GM12878 (cell line): ENCODE measurements at regions of chrX and their contacts with region 1.

Region 1: GRCh38 chrX:18377796-18378195 is 23.3 kb upstream of the SCML2 start:
- DNase-seq: no peak
- ATAC-seq: peak; percentile 85
- H3K4me3 ChIP-seq: no peak overlapping the region
- H3K27ac ChIP-seq: no peak overlapping the region
- H3K4me1 ChIP-seq: no peaks in the 10 kb centered on the region
- H3K27me3 ChIP-seq: no peaks in the 10 kb centered on the region; a peak in 1 of 4 replicates
- CTCF ChIP-seq: peak; percentile 61 to 65 (median 65)
- EP300 ChIP-seq: no peak
- POLR2A ChIP-seq: no peak
- RAD21 ChIP-seq: peak; percentile 68

Region 2: GRCh38 chrX:17744896-17745523 is 632.8 kb before region 1 on chrX:
- CTCF ChIA-PET with region 1: interaction called, 4 read pairs
- POLR2A ChIA-PET with region 1: no interaction called
- RAD21 ChIA-PET with region 1: no interaction called
- SMC1A ChIA-PET with region 1: interaction called, 3 read pairs
- in situ Hi-C with region 1: no loop called
- intact Hi-C with region 1: loop called (anchors 1 kb)
- DNase-seq: no peak
- ATAC-seq: peak; percentile 46; the same call in 2 of the 3 replicates
- H3K4me3 ChIP-seq: no peak overlapping the region
- H3K27ac ChIP-seq: no peak overlapping the region
- H3K4me1 ChIP-seq: no peaks in the 10 kb centered on the region
- H3K27me3 ChIP-seq: no peaks in the 10 kb centered on the region
- CTCF ChIP-seq: peak in 2 of 3 experiments; percentile 8 to 20; a peak in 2 of 6 replicates
- EP300 ChIP-seq: no peak
- POLR2A ChIP-seq: no peak
- RAD21 ChIP-seq: 0 out of 2 replicates have a peak, but pooled peaks have one; percentile 18

Region 3: DNA sequence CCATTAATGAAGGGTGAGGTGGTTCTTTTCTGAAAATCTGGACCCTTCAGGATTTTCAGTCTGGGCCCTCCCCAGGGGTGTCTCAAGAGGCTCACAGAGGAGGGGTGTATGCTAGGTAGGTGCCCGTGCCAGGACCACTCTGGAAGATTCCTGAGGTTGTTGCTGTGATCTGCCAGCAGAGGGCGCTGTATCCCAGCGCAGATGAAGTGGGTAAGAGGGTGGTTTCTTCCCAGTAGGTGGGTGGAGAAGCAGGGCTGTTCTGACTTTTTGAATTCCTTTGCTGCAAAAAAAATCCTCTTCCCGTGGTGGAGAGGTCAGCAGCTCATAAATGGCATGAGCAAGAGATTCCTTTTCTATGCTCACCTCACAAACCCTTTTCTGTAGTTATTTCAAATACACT is 589.4 kb before region 1 on chrX:
- CTCF ChIA-PET with region 1: interaction called, 3 read pairs
- POLR2A ChIA-PET with region 1: no interaction called
- RAD21 ChIA-PET with region 1: no interaction called
- SMC1A ChIA-PET with region 1: no interaction called
- in situ Hi-C with region 1: no loop called
- intact Hi-C with region 1: loop called (anchors 2 kb)
- DNase-seq: no peak
- ATAC-seq: peak; percentile 80
- H3K4me3 ChIP-seq: no peak overlapping the region
- H3K27ac ChIP-seq: no peak overlapping the region
- H3K4me1 ChIP-seq: no peaks in the 10 kb centered on the region
- H3K27me3 ChIP-seq: no peaks in the 10 kb centered on the region
- CTCF ChIP-seq: peak; percentile 67 to 85 (median 75)
- EP300 ChIP-seq: no peak
- POLR2A ChIP-seq: no peak
- RAD21 ChIP-seq: peak; percentile 62

Region 4: GRCh38 chrX:17944833-17945497 is 432.8 kb before region 1 on chrX:
- CTCF ChIA-PET with region 1: interaction called, 12 read pairs
- POLR2A ChIA-PET with region 1: no interaction called
- RAD21 ChIA-PET with region 1: interaction called, 4 read pairs
- SMC1A ChIA-PET with region 1: interaction called, 10 read pairs
- in situ Hi-C with region 1: loop called (anchors 10 kb)
- intact Hi-C with region 1: loop called (anchors 1 kb)
- DNase-seq: no peak
- ATAC-seq: peak; percentile 69
- H3K4me3 ChIP-seq: no peak overlapping the region
- H3K27ac ChIP-seq: no peak overlapping the region
- H3K4me1 ChIP-seq: no peaks in the 10 kb centered on the region
- H3K27me3 ChIP-seq: no peaks in the 10 kb centered on the region; a peak in 1 of 4 replicates
- CTCF ChIP-seq: peak; percentile 56 to 71 (median 67)
- EP300 ChIP-seq: no peak
- POLR2A ChIP-seq: no peak
- RAD21 ChIP-seq: peak; percentile 60

Region 5: GRCh38 chrX:18297251-18297650 is 80.5 kb before region 1 on chrX:
- CTCF ChIA-PET with region 1: no interaction called
- POLR2A ChIA-PET with region 1: no interaction called
- RAD21 ChIA-PET with region 1: no interaction called
- SMC1A ChIA-PET with region 1: no interaction called
- in situ Hi-C with region 1: no loop called
- intact Hi-C with region 1: no loop called
- DNase-seq: no peak
- ATAC-seq: no peak
- H3K4me3 ChIP-seq: no peak overlapping the region
- H3K27ac ChIP-seq: no peak overlapping the region
- H3K4me1 ChIP-seq: no peaks in the 10 kb centered on the region
- H3K27me3 ChIP-seq: no peaks in the 10 kb centered on the region
- CTCF ChIP-seq: no peak
- EP300 ChIP-seq: no peak
- POLR2A ChIP-seq: no peak
- RAD21 ChIP-seq: no peak